ENCODE measurements at regions of chr12 and their contacts with region 1.

Region 1: GRCh38 chr12:63068857-63069442 is 82.1 kb downstream of the AVPR1A start:
- DNase-seq: peak in 1 of 2 donors; percentile 6
- ATAC-seq: peak in 1 of 8 donors; percentile 64
- H3K4me3 ChIP-seq: no peak overlapping the region
- H3K27ac ChIP-seq: peak overlapping the region in 1 of 10 donors; percentile 23
- H3K4me1 ChIP-seq: peaks cover 0 to 11% (median 4%) of the 10 kb centered on the region in 9 donors
- H3K27me3 ChIP-seq: no peaks in the 10 kb centered on the region
- CTCF ChIP-seq: peak in 8 of 9 donors; percentile 30 to 73 (median 65)

Region 2: DNA sequence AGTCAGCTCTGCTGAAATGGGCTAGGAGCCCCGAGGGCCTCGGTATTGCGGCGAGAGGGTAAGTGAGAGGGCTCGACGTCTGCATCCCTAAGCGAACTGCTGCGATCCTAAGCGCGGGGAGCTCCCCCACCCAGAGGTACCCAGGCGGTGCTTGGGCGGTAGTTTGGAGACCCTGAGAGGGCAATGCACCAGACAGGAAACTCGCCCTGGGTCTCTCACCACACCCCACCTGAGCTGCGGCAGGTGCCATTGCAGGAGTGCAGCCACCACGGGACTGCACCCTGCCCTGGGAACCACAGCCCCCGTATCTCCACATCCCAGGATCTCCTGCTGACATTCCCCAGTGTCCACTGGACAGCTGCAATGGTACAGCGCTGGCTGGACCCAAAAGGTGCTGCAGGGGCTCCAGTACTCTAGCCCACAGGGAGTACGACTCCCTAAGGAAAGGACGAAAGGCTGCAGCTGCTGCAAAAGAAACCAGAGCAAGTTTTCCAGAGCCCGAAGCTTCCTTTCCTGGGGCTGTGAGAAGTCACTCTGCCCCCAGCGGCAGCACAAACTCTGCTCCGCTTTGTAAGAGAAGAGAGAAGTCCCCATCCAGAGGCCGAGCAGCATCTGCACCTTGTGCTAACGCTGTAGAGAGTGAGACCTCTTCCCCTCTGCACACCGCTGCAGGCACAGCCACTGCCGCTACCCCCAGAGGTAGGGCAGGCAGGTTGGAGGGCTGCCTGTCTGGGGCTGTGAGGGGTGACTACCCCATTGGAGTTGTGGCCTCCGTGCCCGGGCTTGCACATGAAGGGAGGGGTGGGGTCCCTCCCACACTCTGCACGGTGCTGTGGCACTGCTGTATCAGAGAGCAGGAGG is 633.4 kb before region 1 on chr12:
- intact Hi-C with region 1: loop called in 6 of 10 experiments (anchors 5 to 10 kb)
- DNase-seq: peak; percentile 16 to 29
- ATAC-seq: peak; percentile 46 to 85 (median 81)
- H3K4me3 ChIP-seq: peak overlapping the region in 9 of 10 donors; percentile 34 to 60 (median 54)
- H3K27ac ChIP-seq: no peak overlapping the region
- H3K4me1 ChIP-seq: peaks cover 0 to 18% (median 13%) of the 10 kb centered on the region in 9 donors
- H3K27me3 ChIP-seq: peaks cover 0 to 43% (median 35%) of the 10 kb centered on the region in 7 donors
- CTCF ChIP-seq: peak in 7 of 9 donors; percentile 19 to 64 (median 55)

Region 3: GRCh38 chr12:62575036-62575435 is 493.9 kb before region 1 on chr12:
- intact Hi-C with region 1: loop called in 1 of 10 experiments (anchors 10 kb)
- DNase-seq: no peak
- ATAC-seq: no peak
- H3K4me3 ChIP-seq: no peak overlapping the region
- H3K27ac ChIP-seq: no peak overlapping the region
- H3K4me1 ChIP-seq: no peaks in the 10 kb centered on the region
- H3K27me3 ChIP-seq: no peaks in the 10 kb centered on the region
- CTCF ChIP-seq: no peak

Region 4: GRCh38 chr12:62603061-62603810 is 465.7 kb before region 1 on chr12:
- intact Hi-C with region 1: loop called in 1 of 10 experiments (anchors 10 kb)
- DNase-seq: peak; percentile 86 to 87
- ATAC-seq: peak; percentile 90 to 98 (median 93)
- H3K4me3 ChIP-seq: peak overlapping the region; percentile 55 to 97 (median 80)
- H3K27ac ChIP-seq: peak overlapping the region; percentile 99 to 100 (median 100)
- H3K4me1 ChIP-seq: peaks cover 0 to 45% (median 20%) of the 10 kb centered on the region in 9 donors
- H3K27me3 ChIP-seq: no peaks in the 10 kb centered on the region
- CTCF ChIP-seq: peak; percentile 29 to 79 (median 52)

Region 5: GRCh38 chr12:62813031-62813829 is 255.7 kb before region 1 on chr12:
- intact Hi-C with region 1: loop called (anchors 5 to 10 kb)
- DNase-seq: peak; percentile 59 to 62
- ATAC-seq: peak in 6 of 8 donors; percentile 54 to 84 (median 63)
- H3K4me3 ChIP-seq: peak overlapping the region in 5 of 10 donors; percentile 22 to 33 (median 27)
- H3K27ac ChIP-seq: peak overlapping the region in 1 of 10 donors; percentile 16
- H3K4me1 ChIP-seq: peaks cover 0 to 28% (median 13%) of the 10 kb centered on the region in 9 donors
- H3K27me3 ChIP-seq: no peaks in the 10 kb centered on the region
- CTCF ChIP-seq: peak; percentile 19 to 85 (median 73)

Region 6: DNA sequence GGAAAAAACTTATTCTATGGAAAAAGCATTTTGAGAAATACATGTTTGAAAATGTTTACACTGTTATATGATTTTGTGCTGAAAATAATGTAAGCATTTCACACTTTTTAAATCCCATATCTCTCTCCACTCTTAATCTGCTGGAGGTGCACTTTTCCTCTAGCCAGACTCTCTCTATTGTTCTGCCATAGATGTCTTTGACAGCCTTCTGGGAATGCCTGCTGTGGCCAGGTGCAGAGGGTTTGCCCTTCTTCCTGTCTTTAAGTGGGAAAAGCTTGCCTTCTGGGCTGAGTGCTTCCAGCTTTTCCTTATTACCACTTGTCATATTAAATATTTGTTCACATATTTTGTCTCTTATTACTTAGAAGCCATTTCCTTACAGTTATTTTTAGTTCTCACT is 73.9 kb before region 1 on chr12:
- intact Hi-C with region 1: no loop called
- DNase-seq: no peak
- ATAC-seq: no peak
- H3K4me3 ChIP-seq: no peak overlapping the region
- H3K27ac ChIP-seq: no peak overlapping the region
- H3K4me1 ChIP-seq: no peaks in the 10 kb centered on the region
- H3K27me3 ChIP-seq: no peaks in the 10 kb centered on the region
- CTCF ChIP-seq: no peak

Region 7: DNA sequence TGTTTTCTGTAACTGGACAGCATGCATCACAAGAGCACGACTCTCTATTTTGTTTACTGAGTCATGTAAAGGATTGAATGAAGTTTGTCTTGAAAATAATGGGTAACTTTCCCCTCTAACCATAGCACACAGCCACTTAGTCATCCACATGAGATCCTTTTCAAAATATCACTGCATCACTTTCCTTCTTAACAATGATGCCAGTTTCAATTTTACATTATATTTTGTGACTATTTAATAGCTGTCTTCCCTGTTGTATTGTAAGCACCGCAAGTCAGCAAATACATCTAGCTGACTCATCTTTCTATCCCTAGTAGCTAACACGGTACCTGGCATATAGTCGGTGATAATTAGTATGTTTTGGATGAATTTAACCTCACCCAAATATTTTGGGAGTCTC is 50.7 kb before region 1 on chr12:
- intact Hi-C with region 1: no loop called
- DNase-seq: no peak
- ATAC-seq: no peak
- H3K4me3 ChIP-seq: no peak overlapping the region
- H3K27ac ChIP-seq: no peak overlapping the region
- H3K4me1 ChIP-seq: no peaks in the 10 kb centered on the region
- H3K27me3 ChIP-seq: no peaks in the 10 kb centered on the region
- CTCF ChIP-seq: no peak

Region 8: DNA sequence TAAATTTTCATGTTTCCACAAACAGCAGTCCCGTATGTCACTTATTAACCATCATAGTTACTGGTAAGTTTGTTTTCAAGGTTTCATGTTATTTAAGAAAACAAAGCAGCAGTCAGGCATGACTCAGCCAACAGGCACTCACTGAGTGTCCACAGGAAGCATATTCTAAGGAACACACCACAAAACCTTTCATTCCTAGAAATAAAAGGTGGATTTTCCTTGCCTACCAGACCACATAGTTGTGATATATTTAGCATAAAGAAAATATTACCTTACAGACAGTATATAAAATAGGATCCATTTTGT is 225.3 kb after region 1 on chr12:
- intact Hi-C with region 1: no loop called
- DNase-seq: no peak
- ATAC-seq: peak in 1 of 8 donors; percentile 24
- H3K4me3 ChIP-seq: no peak overlapping the region
- H3K27ac ChIP-seq: no peak overlapping the region
- H3K4me1 ChIP-seq: peaks cover 0 to 5% (median 0%) of the 10 kb centered on the region in 9 donors
- H3K27me3 ChIP-seq: no peaks in the 10 kb centered on the region
- CTCF ChIP-seq: no peak